ENCODE measurements at regions of chr3 and their contacts with region 1.

Region 1: DNA sequence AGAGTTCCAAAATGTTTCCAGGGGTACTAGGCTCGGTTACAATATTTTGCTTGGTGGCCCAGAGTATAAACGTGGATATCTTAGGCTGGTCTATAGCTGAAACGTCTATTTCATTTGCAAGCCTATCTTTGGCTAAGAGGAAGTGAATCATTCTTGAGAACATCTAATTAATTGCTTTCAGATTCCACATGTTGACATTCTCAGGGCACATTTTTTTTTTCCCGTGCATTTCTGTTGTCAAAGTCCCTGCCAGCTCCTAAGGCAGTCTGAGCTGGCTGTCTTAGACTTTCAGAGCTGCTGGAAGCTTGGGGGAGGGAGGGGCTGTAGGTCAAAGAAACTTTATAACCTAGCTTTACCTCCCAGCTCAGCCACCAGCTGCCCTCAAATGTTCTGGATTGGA is 23.2 kb upstream of the LAMP3 start:
- DNase-seq: peak; percentile 59
- H3K4me3 ChIP-seq: no peak overlapping the region
- CTCF ChIP-seq: no peak

Region 2: DNA sequence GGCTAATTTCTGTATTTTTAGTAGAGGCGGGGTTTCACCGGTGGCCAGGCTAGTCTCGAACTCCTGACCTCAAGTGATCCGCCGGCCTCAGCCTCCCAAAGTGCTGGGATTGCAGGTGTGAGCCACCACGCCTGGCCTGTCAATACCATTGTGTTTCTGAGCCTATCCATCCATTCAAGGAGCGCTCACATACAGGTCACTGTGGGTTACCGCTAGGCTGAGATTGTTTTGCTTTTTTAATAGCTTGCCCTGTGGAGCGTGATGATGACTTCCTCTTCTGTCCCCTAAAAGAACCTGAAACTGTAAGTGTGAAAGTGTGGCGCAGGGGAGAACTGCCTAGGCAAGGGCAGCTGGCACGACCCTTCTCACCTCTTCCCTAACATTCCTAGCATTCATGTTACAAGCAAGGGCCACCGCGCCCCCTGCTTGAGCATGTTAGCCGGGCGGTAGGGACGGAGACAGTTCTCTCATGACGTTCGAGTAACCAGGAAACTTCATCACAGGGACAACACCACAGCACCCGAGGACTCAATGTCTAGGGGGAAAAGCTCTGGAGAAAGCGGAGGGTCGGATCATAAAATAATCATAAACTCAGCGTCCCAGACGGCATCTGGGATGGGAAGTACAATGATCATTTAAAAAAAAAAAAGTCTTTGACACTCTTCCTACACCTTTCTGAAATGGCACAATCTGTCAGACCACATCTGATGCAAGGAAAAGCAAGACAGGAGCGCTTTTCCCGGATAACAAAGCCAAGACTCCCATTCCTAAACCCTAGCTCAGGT is 24.0 kb before region 1 on chr3:
- CTCF ChIA-PET with region 1: interaction called, 11 read pairs
- POLR2A ChIA-PET with region 1: no interaction called
- DNase-seq: no peak
- H3K4me3 ChIP-seq: no peak overlapping the region; the same call in 1 of the 2 replicates
- CTCF ChIP-seq: no peak

Region 3: GRCh38 chr3:183392186-183393034 is 206.7 kb after region 1 on chr3:
- CTCF ChIA-PET with region 1: interaction called, 69 read pairs
- POLR2A ChIA-PET with region 1: no interaction called
- DNase-seq: no peak
- H3K4me3 ChIP-seq: no peak overlapping the region
- CTCF ChIP-seq: no peak

Region 4: GRCh38 chr3:183468424-183468823 is 282.7 kb after region 1 on chr3:
- CTCF ChIA-PET with region 1: interaction called, 11 read pairs
- POLR2A ChIA-PET with region 1: no interaction called
- DNase-seq: no peak
- H3K4me3 ChIP-seq: no peak overlapping the region
- CTCF ChIP-seq: no peak

Region 5: DNA sequence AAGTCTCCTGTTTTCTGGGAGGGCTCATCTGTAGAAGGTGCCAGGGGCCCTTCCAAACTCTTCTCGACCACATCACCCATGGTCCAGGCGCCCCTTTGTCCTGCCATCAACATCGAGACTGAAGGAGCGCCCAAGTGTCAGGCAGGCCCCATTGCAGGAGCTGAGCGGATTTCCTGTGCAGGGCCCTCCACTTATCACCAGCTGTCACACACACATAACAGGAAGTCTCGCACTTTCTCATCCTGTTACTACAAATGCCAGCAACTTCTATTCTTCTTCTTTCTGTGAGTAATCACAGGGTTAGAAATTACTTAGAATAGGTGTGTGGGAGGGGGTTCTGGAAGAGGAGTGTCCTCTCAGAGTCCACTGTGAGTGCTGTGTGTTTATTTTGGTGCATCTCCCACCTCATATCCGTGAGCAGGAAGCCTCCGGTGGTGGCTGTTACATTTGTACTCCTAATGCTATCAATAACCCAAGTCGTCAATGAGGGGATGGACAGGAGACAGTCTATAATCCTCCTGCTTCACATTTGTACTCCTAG is 369.9 kb after region 1 on chr3 and contains the start of gene KLHL6:
- CTCF ChIA-PET with region 1: no interaction called
- POLR2A ChIA-PET with region 1: no interaction called
- DNase-seq: no peak
- H3K4me3 ChIP-seq: no peak within 1 kb of the TSS
- CTCF ChIP-seq: no peak

Measured in AG04449 (cell line).